Calu3 (cell line): ENCODE measurements at regions of chr7 and their contacts with region 1.

Region 1: GRCh38 chr7:122092964-122093797 is 50.9 kb downstream of the AASS start:
- DNase-seq: peak; percentile 72
- H3K4me3 Mint-ChIP-seq: no peak overlapping the region
- H3K27ac Mint-ChIP-seq: no peak overlapping the region
- H3K4me1 Mint-ChIP-seq: no peaks in the 10 kb centered on the region
- H3K27me3 Mint-ChIP-seq: no peaks in the 10 kb centered on the region
- CTCF ChIP-seq: peak; percentile 68

Region 2: GRCh38 chr7:122014697-122015096 is 78.5 kb before region 1 on chr7:
- CTCF ChIA-PET with region 1: no interaction called
- intact Hi-C with region 1: loop called (anchors 2 kb)
- DNase-seq: no peak
- H3K4me3 Mint-ChIP-seq: no peak overlapping the region
- H3K27ac Mint-ChIP-seq: no peak overlapping the region
- H3K4me1 Mint-ChIP-seq: peaks cover 8% of the 10 kb centered on the region
- H3K27me3 Mint-ChIP-seq: no peaks in the 10 kb centered on the region
- CTCF ChIP-seq: no peak

Region 3: DNA sequence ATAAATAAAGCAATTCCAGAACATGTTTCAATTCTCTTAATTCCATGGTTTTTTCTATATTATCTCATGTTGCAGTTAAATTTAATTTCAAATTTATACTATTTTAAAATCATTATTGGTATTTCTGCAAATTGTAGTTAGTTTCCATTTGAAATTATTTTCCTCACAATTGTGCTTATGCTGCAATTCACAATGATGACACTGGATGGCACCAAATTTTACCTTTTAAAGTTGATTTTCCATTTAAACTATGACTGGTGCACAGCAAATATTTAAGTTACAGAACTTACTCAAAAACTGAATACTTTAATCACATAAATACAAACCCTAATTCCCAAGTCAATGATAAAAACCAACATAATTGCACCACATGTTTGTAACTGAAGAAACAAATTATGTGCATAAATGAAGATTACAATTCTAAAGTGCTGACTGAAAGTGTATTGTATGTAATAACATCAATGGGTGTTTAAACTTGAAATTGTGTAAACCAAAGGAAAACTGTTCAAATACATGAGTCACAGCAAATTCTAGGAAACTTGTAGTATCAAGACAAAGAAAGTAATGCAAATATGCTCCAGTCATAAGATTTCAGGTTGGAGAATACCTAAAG is 126.2 kb after region 1 on chr7:
- CTCF ChIA-PET with region 1: no interaction called
- intact Hi-C with region 1: loop called (anchors 5 kb)
- DNase-seq: peak; percentile 10
- H3K4me3 Mint-ChIP-seq: no peak overlapping the region
- H3K27ac Mint-ChIP-seq: no peak overlapping the region
- H3K4me1 Mint-ChIP-seq: peaks cover 8% of the 10 kb centered on the region
- H3K27me3 Mint-ChIP-seq: no peaks in the 10 kb centered on the region
- CTCF ChIP-seq: peak; percentile 32

Region 4: GRCh38 chr7:122528879-122529481 is 435.8 kb after region 1 on chr7:
- CTCF ChIA-PET with region 1: interaction called, 3 read pairs
- intact Hi-C with region 1: loop called (anchors 1 kb)
- DNase-seq: no peak
- H3K4me3 Mint-ChIP-seq: no peak overlapping the region
- H3K27ac Mint-ChIP-seq: no peak overlapping the region
- H3K4me1 Mint-ChIP-seq: no peaks in the 10 kb centered on the region
- H3K27me3 Mint-ChIP-seq: no peaks in the 10 kb centered on the region
- CTCF ChIP-seq: no peak